WTC11 (cell line): ENCODE measurements at regions of chr3 and their contacts with region 1.

Region 1: DNA sequence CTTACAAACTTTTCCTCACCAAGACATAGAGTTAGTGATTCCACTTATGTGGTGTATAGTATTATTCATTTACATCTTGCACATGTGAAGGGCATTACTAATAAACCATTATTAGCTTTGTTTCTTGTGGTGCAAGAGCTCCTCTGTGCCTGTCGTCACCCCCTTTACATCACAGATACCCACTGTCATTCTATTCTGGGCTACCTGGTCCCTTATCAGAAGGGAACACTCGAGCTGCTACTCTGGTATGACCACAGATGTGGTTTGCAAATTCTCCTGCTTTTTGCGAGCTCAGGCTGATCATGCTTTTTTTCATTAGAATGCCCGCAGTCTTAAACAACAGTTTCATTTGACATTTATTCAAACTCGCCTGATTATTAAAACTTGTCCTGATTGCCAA is 13.9 kb upstream of the SENP2 start:
- DNase-seq: no peak
- ATAC-seq: no peak
- H3K4me3 Mint-ChIP-seq: no peak overlapping the region
- H3K27ac Mint-ChIP-seq: no peak overlapping the region
- H3K4me1 Mint-ChIP-seq: peaks cover 7% of the 10 kb centered on the region
- H3K27me3 Mint-ChIP-seq: peaks cover 4% of the 10 kb centered on the region; the same call in 1 of the 2 replicates
- CTCF ChIP-seq: no peak

Region 2: GRCh38 chr3:185470323-185470722 is 101.9 kb before region 1 on chr3:
- CTCF ChIA-PET with region 1: interaction called, 11 read pairs
- POLR2A ChIA-PET with region 1: no interaction called
- DNase-seq: peak; percentile 20
- ATAC-seq: peak; percentile 93
- H3K4me3 Mint-ChIP-seq: no peak overlapping the region
- H3K27ac Mint-ChIP-seq: no peak overlapping the region
- H3K4me1 Mint-ChIP-seq: peaks cover 15% of the 10 kb centered on the region
- H3K27me3 Mint-ChIP-seq: no peaks in the 10 kb centered on the region
- CTCF ChIP-seq: no peak

Region 3: GRCh38 chr3:185519021-185519420 is 53.2 kb before region 1 on chr3:
- CTCF ChIA-PET with region 1: interaction called, 10 read pairs
- POLR2A ChIA-PET with region 1: no interaction called
- DNase-seq: no peak
- ATAC-seq: peak; percentile 78
- H3K4me3 Mint-ChIP-seq: no peak overlapping the region
- H3K27ac Mint-ChIP-seq: no peak overlapping the region
- H3K4me1 Mint-ChIP-seq: no peaks in the 10 kb centered on the region
- H3K27me3 Mint-ChIP-seq: peaks cover 9% of the 10 kb centered on the region
- CTCF ChIP-seq: no peak

Region 4: GRCh38 chr3:185558395-185558794 is 13.8 kb before region 1 on chr3:
- CTCF ChIA-PET with region 1: interaction called, 76 read pairs
- POLR2A ChIA-PET with region 1: no interaction called
- DNase-seq: no peak
- ATAC-seq: no peak
- H3K4me3 Mint-ChIP-seq: no peak overlapping the region
- H3K27ac Mint-ChIP-seq: peak overlapping the region; percentile 54
- H3K4me1 Mint-ChIP-seq: peaks cover 37% of the 10 kb centered on the region
- H3K27me3 Mint-ChIP-seq: peaks cover 16% of the 10 kb centered on the region; the same call in 1 of the 2 replicates
- CTCF ChIP-seq: no peak